Caco-2 (cell line): ENCODE measurements at regions of chr5 and their contacts with region 1.

Region 1: DNA sequence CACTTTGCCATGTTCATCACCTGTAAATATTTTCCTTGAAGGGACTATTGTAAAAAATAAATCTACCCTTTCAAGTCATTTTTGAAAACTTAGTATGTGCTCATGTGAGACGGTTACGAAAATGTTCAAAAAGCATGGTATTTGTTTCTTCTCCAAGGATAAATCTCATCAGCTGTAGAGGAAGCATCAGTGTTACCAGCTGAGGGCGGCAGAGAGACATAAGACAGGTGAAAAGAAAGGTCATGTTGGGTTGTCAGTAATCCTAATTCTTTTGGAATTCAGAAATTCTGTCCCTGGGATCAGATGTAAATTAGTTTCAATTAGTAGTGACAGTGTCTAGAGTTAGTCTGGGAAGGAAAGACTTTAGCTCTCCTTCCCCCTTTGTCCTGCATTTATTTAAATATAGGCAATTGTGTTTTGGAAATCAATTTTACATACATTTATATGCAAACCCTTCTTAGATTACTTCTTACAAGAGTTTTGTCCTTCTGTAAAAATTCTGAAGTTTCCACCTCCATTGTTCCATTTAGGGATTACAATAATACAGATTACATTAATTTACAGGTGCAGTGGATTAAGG is 791.9 kb upstream of the CDH6 start:
- DNase-seq: peak; percentile 69
- H3K4me3 ChIP-seq: no peak overlapping the region
- H3K4me3 Mint-ChIP-seq: no peak overlapping the region
- H3K27ac Mint-ChIP-seq: no peak overlapping the region
- H3K4me1 ChIP-seq: no peaks in the 10 kb centered on the region
- H3K4me1 Mint-ChIP-seq: no peaks in the 10 kb centered on the region
- H3K27me3 ChIP-seq: no peaks in the 10 kb centered on the region
- H3K27me3 Mint-ChIP-seq: no peaks in the 10 kb centered on the region
- CTCF ChIP-seq: peak; percentile 64 to 82

Region 2: GRCh38 chr5:30040488-30041118 is 361.0 kb before region 1 on chr5:
- CTCF ChIA-PET with region 1: interaction called, 4 read pairs
- POLR2A ChIA-PET with region 1: no interaction called
- intact Hi-C with region 1: loop called (anchors 1 kb)
- DNase-seq: peak; percentile 56 to 69
- H3K4me3 ChIP-seq: no peak overlapping the region
- H3K4me3 Mint-ChIP-seq: no peak overlapping the region
- H3K27ac Mint-ChIP-seq: no peak overlapping the region
- H3K4me1 ChIP-seq: no peaks in the 10 kb centered on the region
- H3K4me1 Mint-ChIP-seq: no peaks in the 10 kb centered on the region
- H3K27me3 ChIP-seq: no peaks in the 10 kb centered on the region
- H3K27me3 Mint-ChIP-seq: no peaks in the 10 kb centered on the region
- CTCF ChIP-seq: peak; percentile 75 to 90

Region 3: DNA sequence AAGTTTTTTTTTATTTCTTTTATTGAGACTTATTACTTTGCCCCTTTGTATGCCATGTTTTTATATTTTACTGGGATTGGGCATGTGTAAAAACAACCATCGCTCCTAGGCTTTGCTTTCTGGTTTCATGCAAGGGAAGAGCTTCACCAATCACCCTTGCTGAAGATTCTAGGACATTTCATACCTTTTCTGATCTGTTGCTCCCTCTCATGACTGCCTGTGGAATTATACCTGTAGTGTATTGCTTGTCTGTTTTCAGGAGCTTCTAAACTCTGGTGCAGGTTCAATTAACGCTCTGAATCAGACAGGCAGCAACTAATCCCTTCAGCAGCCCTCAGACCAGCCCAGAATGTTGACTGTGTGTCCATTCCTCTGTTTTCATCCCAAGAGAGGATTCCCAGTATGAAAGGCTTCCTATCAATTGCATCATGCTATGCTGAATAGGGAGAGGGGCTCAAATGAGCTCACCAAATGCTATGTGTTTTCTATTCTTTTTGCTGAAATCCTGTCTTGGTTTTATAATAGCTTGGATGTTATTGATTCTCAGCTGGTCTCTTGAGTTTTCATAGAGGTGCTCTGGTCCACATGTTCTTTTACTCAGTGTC is 219.0 kb after region 1 on chr5:
- CTCF ChIA-PET with region 1: no interaction called
- POLR2A ChIA-PET with region 1: no interaction called
- intact Hi-C with region 1: loop called (anchors 1 kb)
- DNase-seq: no peak
- H3K4me3 ChIP-seq: no peak overlapping the region
- H3K4me3 Mint-ChIP-seq: no peak overlapping the region
- H3K27ac Mint-ChIP-seq: no peak overlapping the region
- H3K4me1 ChIP-seq: no peaks in the 10 kb centered on the region
- H3K4me1 Mint-ChIP-seq: no peaks in the 10 kb centered on the region
- H3K27me3 ChIP-seq: no peaks in the 10 kb centered on the region
- H3K27me3 Mint-ChIP-seq: no peaks in the 10 kb centered on the region
- CTCF ChIP-seq: no peak

Region 4: GRCh38 chr5:30856242-30856641 is 454.7 kb after region 1 on chr5:
- CTCF ChIA-PET with region 1: no interaction called
- POLR2A ChIA-PET with region 1: no interaction called
- intact Hi-C with region 1: no loop called
- DNase-seq: no peak
- H3K4me3 ChIP-seq: no peak overlapping the region
- H3K4me3 Mint-ChIP-seq: no peak overlapping the region
- H3K27ac Mint-ChIP-seq: no peak overlapping the region
- H3K4me1 ChIP-seq: no peaks in the 10 kb centered on the region
- H3K4me1 Mint-ChIP-seq: no peaks in the 10 kb centered on the region
- H3K27me3 ChIP-seq: no peaks in the 10 kb centered on the region
- H3K27me3 Mint-ChIP-seq: peaks cover 7% of the 10 kb centered on the region
- CTCF ChIP-seq: no peak

Region 5: GRCh38 chr5:31186672-31187267 is 785.2 kb after region 1 on chr5:
- CTCF ChIA-PET with region 1: no interaction called
- POLR2A ChIA-PET with region 1: no interaction called
- intact Hi-C with region 1: loop called (anchors 5 kb)
- DNase-seq: peak in 1 of 2 experiments; percentile 51
- H3K4me3 ChIP-seq: no peak overlapping the region
- H3K4me3 Mint-ChIP-seq: no peak overlapping the region
- H3K27ac Mint-ChIP-seq: no peak overlapping the region
- H3K4me1 ChIP-seq: no peaks in the 10 kb centered on the region
- H3K4me1 Mint-ChIP-seq: peaks cover 6% of the 10 kb centered on the region
- H3K27me3 ChIP-seq: no peaks in the 10 kb centered on the region
- H3K27me3 Mint-ChIP-seq: no peaks in the 10 kb centered on the region
- CTCF ChIP-seq: peak; percentile 72 to 80

Region 6: DNA sequence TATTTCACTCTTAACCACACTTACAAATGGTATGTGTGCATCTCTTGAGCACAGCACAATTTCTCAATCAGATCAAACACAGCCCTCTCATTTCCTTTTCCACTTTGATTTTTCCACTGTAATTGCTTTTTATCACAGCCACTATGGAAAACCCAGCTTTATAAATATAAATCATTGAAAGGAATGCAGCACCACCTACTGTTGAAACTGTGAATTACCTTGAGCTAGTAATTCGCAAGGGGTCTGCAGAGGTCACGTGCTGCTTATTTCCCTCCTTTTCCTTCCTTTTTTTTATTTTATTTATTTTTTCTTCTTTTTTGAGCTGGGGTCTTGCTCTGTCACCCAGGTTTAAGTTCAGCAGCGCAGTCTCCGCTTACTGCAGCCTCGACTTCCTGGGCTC is 868.8 kb after region 1 on chr5:
- CTCF ChIA-PET with region 1: no interaction called
- POLR2A ChIA-PET with region 1: no interaction called
- intact Hi-C with region 1: loop called (anchors 2 kb)
- DNase-seq: peak in 1 of 2 experiments; percentile 20
- H3K4me3 ChIP-seq: no peak overlapping the region
- H3K4me3 Mint-ChIP-seq: no peak overlapping the region
- H3K27ac Mint-ChIP-seq: no peak overlapping the region
- H3K4me1 ChIP-seq: no peaks in the 10 kb centered on the region
- H3K4me1 Mint-ChIP-seq: no peaks in the 10 kb centered on the region
- H3K27me3 ChIP-seq: no peaks in the 10 kb centered on the region
- H3K27me3 Mint-ChIP-seq: no peaks in the 10 kb centered on the region
- CTCF ChIP-seq: peak; percentile 45 to 73